Right cardiac atrium (tissue), 5 donors: ENCODE measurements at regions of chr20 and their contacts with region 1.

Region 1: GRCh38 chr20:58209652-58210397 is 18.6 kb downstream of the ANKRD60 start:
- DNase-seq: peak; percentile 81 to 94 (median 93)
- ATAC-seq: peak; percentile 84 to 85
- H3K4me3 ChIP-seq: no peak overlapping the region
- H3K27ac ChIP-seq: no peak overlapping the region
- H3K4me1 ChIP-seq: no peaks in the 10 kb centered on the region
- H3K27me3 ChIP-seq: no peaks in the 10 kb centered on the region

Region 2: DNA sequence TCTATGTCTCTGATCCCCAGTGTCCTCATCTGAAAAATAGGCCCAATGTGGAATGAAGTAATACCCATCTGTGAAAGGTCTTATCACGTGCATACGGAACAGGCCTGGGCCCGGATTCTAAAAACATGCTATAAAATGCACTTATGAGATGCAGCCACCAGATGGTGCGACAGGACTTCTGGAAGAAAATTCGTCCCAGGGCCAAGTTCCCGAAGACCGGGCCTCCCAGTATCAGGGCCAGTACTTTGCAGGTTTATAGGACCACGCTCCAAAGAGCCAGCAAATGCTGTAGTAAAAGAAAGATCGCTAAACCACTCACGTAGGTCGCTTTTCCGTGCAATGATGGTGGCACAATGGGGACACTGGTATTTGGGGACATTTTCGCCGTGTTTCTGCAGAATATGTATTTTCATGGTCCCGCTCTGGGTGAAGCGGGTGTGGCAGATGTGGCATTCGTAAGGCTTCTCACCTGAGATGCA is 695.5 kb before region 1 on chr20:
- intact Hi-C with region 1: loop called (anchors 2 to 5 kb)
- DNase-seq: peak; percentile 67 to 78 (median 75)
- ATAC-seq: peak; percentile 85 to 89
- H3K4me3 ChIP-seq: no peak overlapping the region
- H3K27ac ChIP-seq: no peak overlapping the region
- H3K4me1 ChIP-seq: no peaks in the 10 kb centered on the region
- H3K27me3 ChIP-seq: no peaks in the 10 kb centered on the region

Region 3: GRCh38 chr20:57522380-57522993 is 687.3 kb before region 1 on chr20:
- intact Hi-C with region 1: loop called in 2 of 4 experiments (anchors 5 kb)
- DNase-seq: no peak
- ATAC-seq: no peak
- H3K4me3 ChIP-seq: no peak overlapping the region
- H3K27ac ChIP-seq: no peak overlapping the region
- H3K4me1 ChIP-seq: no peaks in the 10 kb centered on the region
- H3K27me3 ChIP-seq: no peaks in the 10 kb centered on the region

Region 4: DNA sequence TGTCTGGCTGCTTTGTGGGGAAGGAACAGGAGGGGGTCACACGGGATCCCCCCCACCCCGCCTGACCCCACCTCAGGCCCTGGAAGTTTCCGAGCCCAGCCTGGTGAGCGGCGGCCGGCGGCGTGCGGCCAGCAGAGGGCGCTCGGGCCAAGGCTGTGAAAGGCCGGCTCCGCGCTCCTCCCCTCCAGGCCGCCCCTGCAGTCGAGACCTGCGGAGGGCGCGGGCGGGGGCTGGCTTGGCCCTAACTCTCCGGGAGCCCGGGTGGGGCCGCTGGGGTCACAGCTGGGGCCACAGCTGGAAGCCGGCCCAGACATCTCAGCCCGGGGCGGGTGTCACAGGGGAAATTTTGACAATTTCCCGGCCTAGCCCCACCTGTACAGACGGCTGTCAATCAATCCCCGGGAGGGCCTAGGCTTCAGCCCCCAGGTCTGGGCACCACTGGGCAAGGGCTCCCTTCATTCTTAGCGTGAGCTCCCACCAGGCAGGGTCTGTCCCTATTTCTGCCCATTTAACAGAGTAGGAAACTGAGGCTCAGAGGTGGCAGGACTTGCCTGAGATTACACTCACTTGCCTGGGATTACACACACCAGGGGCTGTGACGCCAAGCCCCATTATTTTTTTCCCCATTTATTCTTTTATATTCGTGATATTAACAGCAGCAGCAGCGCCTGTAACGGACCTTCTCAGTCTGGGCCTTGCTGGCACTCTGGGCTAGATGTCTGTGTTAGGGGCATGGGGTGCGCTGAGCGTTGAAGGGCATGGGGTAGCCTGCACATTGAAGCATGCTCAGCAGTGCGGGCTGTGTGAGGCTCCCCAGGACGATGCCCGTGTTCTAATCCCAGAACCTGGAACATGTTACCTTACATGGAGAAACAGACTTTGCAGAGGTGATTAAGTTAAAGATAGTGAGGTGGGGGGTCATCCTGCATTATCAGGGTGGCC is 612.6 kb before region 1 on chr20:
- intact Hi-C with region 1: loop called (anchors 1 to 5 kb)
- DNase-seq: peak; percentile 66 to 91 (median 89)
- ATAC-seq: peak; percentile 80 to 84
- H3K4me3 ChIP-seq: no peak overlapping the region
- H3K27ac ChIP-seq: no peak overlapping the region
- H3K4me1 ChIP-seq: no peaks in the 10 kb centered on the region
- H3K27me3 ChIP-seq: no peaks in the 10 kb centered on the region

Region 5: GRCh38 chr20:57866221-57867106 is 343.4 kb before region 1 on chr20:
- intact Hi-C with region 1: no loop called
- DNase-seq: no peak
- ATAC-seq: peak in 1 of 2 donors; percentile 54
- H3K4me3 ChIP-seq: no peak overlapping the region
- H3K27ac ChIP-seq: no peak overlapping the region
- H3K4me1 ChIP-seq: no peaks in the 10 kb centered on the region
- H3K27me3 ChIP-seq: no peaks in the 10 kb centered on the region

Region 6: GRCh38 chr20:58141971-58142781 is 67.6 kb before region 1 on chr20:
- intact Hi-C with region 1: loop called in 1 of 4 experiments (anchors 10 kb)
- DNase-seq: no peak
- ATAC-seq: no peak
- H3K4me3 ChIP-seq: no peak overlapping the region
- H3K27ac ChIP-seq: no peak overlapping the region
- H3K4me1 ChIP-seq: no peaks in the 10 kb centered on the region
- H3K27me3 ChIP-seq: no peaks in the 10 kb centered on the region